Endothelial cell of umbilical vein (primary cell): ENCODE measurements at regions of chr19 and their contacts with region 1.

Region 1: GRCh38 chr19:47210689-47211316 is 20.2 kb downstream of the BBC3 start:
- DNase-seq: peak; percentile 91
- H3K4me3 ChIP-seq: no peak overlapping the region
- H3K27ac ChIP-seq: peak overlapping the region; percentile 75
- H3K4me1 ChIP-seq: peaks cover 8% of the 10 kb centered on the region
- H3K27me3 ChIP-seq: no peaks in the 10 kb centered on the region
- CTCF ChIP-seq: peak; percentile 69 to 85
- POLR2A ChIP-seq: no peak

Region 2: GRCh38 chr19:47157431-47158321 is 53.1 kb before region 1 on chr19:
- CTCF ChIA-PET with region 1: interaction called, 34 read pairs
- POLR2A ChIA-PET with region 1: no interaction called
- dilution Hi-C with region 1: loop called (anchors 10 kb)
- intact Hi-C with region 1: no loop called
- DNase-seq: peak; percentile 90
- H3K4me3 ChIP-seq: no peak overlapping the region
- H3K27ac ChIP-seq: peak overlapping the region; percentile 95
- H3K4me1 ChIP-seq: peaks cover 33% of the 10 kb centered on the region
- H3K27me3 ChIP-seq: no peaks in the 10 kb centered on the region
- CTCF ChIP-seq: peak in 1 of 2 donors; percentile 11
- POLR2A ChIP-seq: no peak

Region 3: DNA sequence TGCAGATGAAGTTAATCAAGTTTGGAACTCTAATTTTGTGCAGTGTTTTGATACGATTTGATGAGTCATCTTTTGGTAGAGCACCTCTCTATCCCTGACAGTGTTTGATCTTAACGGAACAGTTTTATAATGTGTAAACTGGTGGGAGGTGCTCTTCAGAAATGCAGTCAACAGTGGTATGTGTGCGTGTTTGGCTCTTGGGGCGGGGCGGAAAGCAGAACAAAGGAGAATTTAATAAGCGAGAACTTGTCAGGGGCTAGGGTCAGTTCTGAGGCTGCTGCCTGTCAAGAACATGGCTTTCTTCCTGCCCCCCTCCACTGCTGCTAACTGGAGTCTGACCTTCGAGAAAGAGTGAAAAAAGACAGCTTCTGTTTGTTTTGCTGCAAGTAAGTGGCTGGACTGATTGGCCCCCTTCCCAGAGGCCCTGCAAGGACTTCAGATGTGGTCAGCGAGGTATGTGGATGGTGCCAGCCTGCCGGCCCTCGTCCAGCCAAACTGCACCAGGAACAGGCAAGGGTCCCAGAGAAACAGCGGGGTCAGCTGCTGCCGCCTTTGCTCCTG is 20.6 kb before region 1 on chr19:
- CTCF ChIA-PET with region 1: interaction called, 28 read pairs
- POLR2A ChIA-PET with region 1: no interaction called
- dilution Hi-C with region 1: no loop called
- intact Hi-C with region 1: no loop called
- DNase-seq: peak; percentile 97
- H3K4me3 ChIP-seq: peak overlapping the region in 1 of 3 experiments; percentile 20
- H3K27ac ChIP-seq: peak overlapping the region; percentile 96
- H3K4me1 ChIP-seq: peaks cover 24% of the 10 kb centered on the region
- H3K27me3 ChIP-seq: no peaks in the 10 kb centered on the region
- CTCF ChIP-seq: no peak
- POLR2A ChIP-seq: no peak

Region 4: DNA sequence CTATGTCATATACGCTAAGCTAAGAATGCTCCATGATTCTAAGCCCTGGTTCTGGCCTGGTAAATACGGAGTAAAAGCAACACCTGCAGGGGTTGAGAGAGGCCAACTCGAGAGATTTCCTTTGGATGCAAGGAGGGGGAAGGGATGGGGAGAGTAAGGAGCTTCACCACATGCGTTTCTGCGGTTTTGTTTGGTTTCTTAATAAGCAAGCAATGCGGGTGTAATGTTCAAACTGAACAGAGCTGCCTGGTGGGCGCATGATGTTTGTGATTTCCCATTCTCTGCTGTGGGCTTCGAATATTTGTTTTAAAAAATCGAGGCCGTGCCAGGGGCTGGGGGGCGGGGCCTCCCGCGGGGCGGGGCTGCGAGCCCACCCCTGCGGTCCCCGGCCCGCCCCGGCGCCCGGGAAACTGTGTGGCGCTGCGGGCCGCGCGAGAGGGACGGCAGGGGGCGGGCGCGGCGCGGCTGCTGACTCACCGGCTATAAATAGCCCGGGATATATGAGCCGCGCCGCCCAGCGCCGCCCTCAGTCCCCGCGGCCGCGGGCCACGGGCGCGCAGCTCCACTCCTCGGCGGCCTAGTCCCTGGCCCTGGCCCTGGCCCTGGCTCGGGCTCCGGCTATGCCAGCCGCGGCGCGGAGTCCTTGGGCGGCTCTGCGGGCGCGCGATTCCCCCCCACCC is 15.1 kb after region 1 on chr19:
- CTCF ChIA-PET with region 1: interaction called, 51 read pairs
- POLR2A ChIA-PET with region 1: interaction called, 24 read pairs
- dilution Hi-C with region 1: no loop called
- intact Hi-C with region 1: loop called (anchors 1 kb)
- DNase-seq: peak; percentile 84
- H3K4me3 ChIP-seq: peak overlapping the region in 1 of 3 experiments; percentile 31
- H3K27ac ChIP-seq: peak overlapping the region; percentile 61
- H3K4me1 ChIP-seq: peaks cover 22% of the 10 kb centered on the region
- H3K27me3 ChIP-seq: no peaks in the 10 kb centered on the region
- CTCF ChIP-seq: peak in 1 of 2 donors; percentile 6
- POLR2A ChIP-seq: peak; percentile 100

Region 5: GRCh38 chr19:47256688-47257443 is 46.1 kb after region 1 on chr19:
- CTCF ChIA-PET with region 1: interaction called, 16 read pairs
- POLR2A ChIA-PET with region 1: no interaction called
- dilution Hi-C with region 1: no loop called
- intact Hi-C with region 1: no loop called
- DNase-seq: peak; percentile 99
- H3K4me3 ChIP-seq: peak overlapping the region in 2 of 3 experiments; percentile 34 to 73
- H3K27ac ChIP-seq: peak overlapping the region; percentile 96
- H3K4me1 ChIP-seq: peaks cover 11% of the 10 kb centered on the region
- H3K27me3 ChIP-seq: no peaks in the 10 kb centered on the region
- CTCF ChIP-seq: no peak
- POLR2A ChIP-seq: no peak